Activated CD8-positive, alpha-beta memory T cell treated with anti-CD3 and anti-CD28 coated beads, Interleukin-2, amount 10 ng/mL, durations not matched to agents 7 days and 5 days (primary cell): ENCODE measurements at regions of chr19 and their contacts with region 1.

Region 1: DNA sequence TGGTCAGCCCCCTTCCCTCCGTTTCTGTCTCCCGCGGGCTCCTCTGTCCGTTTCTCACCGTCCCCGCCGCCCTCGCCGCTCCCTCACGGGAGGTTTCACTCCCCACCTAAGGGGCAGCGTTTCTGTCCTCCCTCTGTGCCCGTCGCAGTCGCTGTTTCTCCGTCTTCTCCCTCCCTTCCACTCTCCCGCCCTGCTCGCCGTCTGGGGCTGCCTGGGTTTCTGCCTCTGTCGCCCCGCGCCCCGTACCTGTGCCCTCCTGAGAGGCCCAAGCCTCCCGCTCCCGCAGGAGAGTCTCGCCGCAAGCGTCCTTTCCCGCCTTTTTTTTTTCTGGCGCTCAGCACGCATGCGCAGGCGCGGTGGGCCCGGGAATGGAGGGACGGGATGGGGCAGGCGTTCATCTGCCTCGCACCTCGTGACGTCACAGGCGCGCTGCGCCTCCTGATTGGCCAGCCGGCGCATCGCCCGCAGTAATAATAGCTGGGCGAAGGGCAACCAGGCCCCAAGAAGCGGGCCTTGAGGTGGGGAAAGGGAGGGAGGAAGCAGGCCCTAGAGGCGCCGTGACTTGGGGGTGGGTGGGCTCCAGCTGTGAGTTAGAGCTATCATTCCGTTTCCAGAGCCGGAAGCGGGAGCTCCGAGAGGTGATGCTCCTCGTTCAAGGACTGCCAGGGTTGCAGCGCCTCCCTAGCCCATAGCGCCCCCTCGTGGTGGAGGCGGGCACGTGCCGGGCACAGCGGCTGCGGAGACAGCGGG is 15.4 kb downstream of the SSC5D start:
- DNase-seq: peak; percentile 95
- ATAC-seq: peak; percentile 98
- H3K4me3 Mint-ChIP-seq: peak overlapping the region; percentile 64
- H3K27ac Mint-ChIP-seq: peak overlapping the region; percentile 86
- H3K4me1 Mint-ChIP-seq: peaks cover 23% of the 10 kb centered on the region
- H3K27me3 Mint-ChIP-seq: peaks cover 4% of the 10 kb centered on the region

Region 2: DNA sequence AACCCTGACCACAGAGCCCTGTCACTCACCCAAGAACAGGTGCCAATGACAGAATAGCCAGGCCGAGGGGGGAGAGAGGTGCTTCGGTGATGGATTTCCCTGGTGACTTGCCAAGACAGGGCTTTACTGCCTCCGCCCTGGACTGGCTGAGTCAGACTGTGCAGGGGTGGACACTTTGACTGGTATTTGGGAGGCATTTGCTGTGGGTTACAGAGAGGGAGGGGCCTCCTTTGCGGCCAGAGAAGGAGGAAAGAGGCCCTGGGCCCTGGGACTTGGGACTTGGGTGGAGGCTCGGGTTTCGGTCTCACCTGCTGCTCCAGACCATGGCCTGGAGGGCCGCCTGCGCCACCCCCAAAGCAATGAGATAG is 432.6 kb before region 1 on chr19:
- CTCF ChIA-PET with region 1: no interaction called
- DNase-seq: no peak
- ATAC-seq: no peak
- H3K4me3 Mint-ChIP-seq: no peak overlapping the region
- H3K27ac Mint-ChIP-seq: no peak overlapping the region
- H3K4me1 Mint-ChIP-seq: peaks cover 7% of the 10 kb centered on the region
- H3K27me3 Mint-ChIP-seq: peaks cover 59% of the 10 kb centered on the region

Region 3: DNA sequence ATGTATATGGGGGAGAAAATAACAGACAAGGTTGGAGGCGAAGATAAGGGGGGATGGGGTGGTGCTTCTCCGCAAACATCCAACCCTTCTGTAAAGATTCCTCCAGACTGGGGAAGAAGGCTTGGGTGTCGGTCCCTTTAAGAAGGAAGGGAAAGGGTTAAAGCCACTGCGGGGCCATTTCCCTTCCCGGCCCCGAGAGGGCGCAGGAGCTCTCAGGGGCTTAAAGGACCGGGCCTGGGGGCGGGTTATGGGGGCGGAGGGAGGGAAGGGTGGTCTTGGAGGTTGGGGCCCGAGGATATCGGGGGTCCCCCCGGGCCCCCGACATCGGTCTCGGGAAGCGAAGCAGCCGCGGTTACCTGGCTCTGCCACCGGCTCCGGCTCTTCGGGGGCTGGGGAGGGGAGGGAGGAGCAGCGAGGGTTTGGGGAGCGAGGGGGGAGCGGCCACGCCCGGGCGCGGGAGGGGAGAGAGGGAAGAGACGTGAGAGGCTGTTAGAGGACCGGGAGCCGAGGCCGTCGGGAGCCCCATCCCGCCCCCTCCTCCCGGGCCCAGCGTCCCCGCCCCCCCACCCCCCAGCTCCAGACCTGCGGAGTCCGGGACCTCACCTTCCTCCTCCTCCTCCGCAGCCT is 357.5 kb before region 1 on chr19:
- CTCF ChIA-PET with region 1: interaction called, 33 read pairs
- DNase-seq: peak; percentile 56
- ATAC-seq: peak; percentile 51
- H3K4me3 Mint-ChIP-seq: no peak overlapping the region
- H3K27ac Mint-ChIP-seq: no peak overlapping the region
- H3K4me1 Mint-ChIP-seq: peaks cover 6% of the 10 kb centered on the region
- H3K27me3 Mint-ChIP-seq: peaks cover 56% of the 10 kb centered on the region

Region 4: GRCh38 chr19:55289117-55289796 is 214.4 kb before region 1 on chr19:
- CTCF ChIA-PET with region 1: interaction called, 14 read pairs
- DNase-seq: no peak
- ATAC-seq: no peak
- H3K4me3 Mint-ChIP-seq: no peak overlapping the region
- H3K27ac Mint-ChIP-seq: no peak overlapping the region
- H3K4me1 Mint-ChIP-seq: peaks cover 8% of the 10 kb centered on the region
- H3K27me3 Mint-ChIP-seq: no peaks in the 10 kb centered on the region

Region 5: GRCh38 chr19:55461259-55461973 is 42.3 kb before region 1 on chr19 and contains the start of gene ISOC2:
- CTCF ChIA-PET with region 1: interaction called, 76 read pairs
- DNase-seq: peak; percentile 100
- ATAC-seq: peak; percentile 96
- H3K4me3 Mint-ChIP-seq: peak within 1 kb of the TSS; percentile 81
- H3K27ac Mint-ChIP-seq: peak within 1 kb of the TSS; percentile 85
- H3K4me1 Mint-ChIP-seq: peaks cover 19% of the 10 kb centered on the region
- H3K27me3 Mint-ChIP-seq: peaks cover 2% of the 10 kb centered on the region
- total RNA-seq, gene ISOC2: 28.2 to 35.7 TPM

Region 6: DNA sequence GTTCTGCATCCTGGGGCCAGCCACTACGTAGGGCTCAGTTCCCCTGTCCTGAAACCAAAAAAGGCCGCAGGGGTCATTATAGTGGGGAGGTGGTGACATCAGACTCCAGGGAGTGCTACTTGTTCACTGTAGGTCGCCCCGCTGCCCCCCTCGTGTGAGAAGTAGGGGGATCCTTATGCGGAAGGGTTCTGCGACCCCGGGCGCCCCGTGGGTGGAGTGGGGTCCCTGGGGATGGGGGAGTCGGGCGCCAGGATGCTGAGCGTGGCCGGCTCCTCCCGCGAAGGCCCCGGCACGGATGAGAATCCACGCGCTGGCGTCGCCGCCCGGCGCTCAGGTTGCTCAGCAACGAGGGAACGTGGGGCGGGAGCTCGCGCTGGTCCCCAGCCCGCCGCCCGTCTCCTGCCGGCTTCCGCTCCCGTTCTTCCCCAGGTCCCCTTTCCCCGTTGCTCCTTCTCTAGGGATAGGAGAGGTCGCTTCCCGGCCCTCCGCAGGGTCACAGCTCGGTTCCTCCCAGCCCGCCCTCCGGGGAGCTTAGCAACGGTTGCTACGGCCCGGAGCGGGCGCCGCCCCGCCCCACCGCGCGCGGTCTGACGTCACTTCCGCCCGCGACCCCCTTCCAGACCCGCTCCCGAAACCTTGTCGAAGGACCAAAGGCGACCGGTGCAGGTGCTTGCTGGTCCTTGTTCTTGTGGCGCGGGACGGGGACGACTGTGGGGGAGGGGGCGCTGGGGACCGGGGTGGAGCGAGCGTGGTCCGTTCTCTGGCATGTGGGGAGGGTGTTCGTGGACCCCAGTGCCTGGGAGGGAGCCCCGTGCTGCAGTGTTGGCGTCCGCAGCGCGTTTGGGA is 18.9 kb before region 1 on chr19 and contains the start of gene NAT14:
- CTCF ChIA-PET with region 1: interaction called, 47 read pairs
- DNase-seq: peak; percentile 72
- ATAC-seq: peak; percentile 74
- H3K4me3 Mint-ChIP-seq: peak within 1 kb of the TSS; percentile 73
- H3K27ac Mint-ChIP-seq: peak within 1 kb of the TSS; percentile 70
- H3K4me1 Mint-ChIP-seq: peaks cover 8% of the 10 kb centered on the region
- H3K27me3 Mint-ChIP-seq: no peaks in the 10 kb centered on the region
- total RNA-seq, gene NAT14: 14.6 to 23.2 TPM

Region 7: GRCh38 chr19:55605207-55605636 is 101.5 kb after region 1 on chr19:
- CTCF ChIA-PET with region 1: interaction called, 36 read pairs
- DNase-seq: peak; percentile 99
- ATAC-seq: peak; percentile 86
- H3K4me3 Mint-ChIP-seq: peak overlapping the region; percentile 81
- H3K27ac Mint-ChIP-seq: peak overlapping the region; percentile 92
- H3K4me1 Mint-ChIP-seq: peaks cover 50% of the 10 kb centered on the region
- H3K27me3 Mint-ChIP-seq: no peaks in the 10 kb centered on the region